Activated CD4-positive, alpha-beta T cell treated with anti-CD3 and anti-CD28 coated beads for 36 hours (primary cell): ENCODE measurements at regions of chr5 and their contacts with region 1.

Region 1: GRCh38 chr5:179668391-179668790 is 12.4 kb downstream of the CBY3 start:
- DNase-seq: peak; percentile 69
- ATAC-seq: peak; percentile 81
- H3K4me3 Mint-ChIP-seq: no peak overlapping the region
- H3K27ac Mint-ChIP-seq: no peak overlapping the region
- H3K4me1 Mint-ChIP-seq: no peaks in the 10 kb centered on the region
- H3K27me3 Mint-ChIP-seq: no peaks in the 10 kb centered on the region

Region 2: GRCh38 chr5:179568721-179569120 is 99.7 kb before region 1 on chr5:
- CTCF ChIA-PET with region 1: no interaction called
- POLR2A ChIA-PET with region 1: interaction called, 11 read pairs
- intact Hi-C with region 1: no loop called
- DNase-seq: no peak
- ATAC-seq: no peak
- H3K4me3 Mint-ChIP-seq: no peak overlapping the region
- H3K27ac Mint-ChIP-seq: no peak overlapping the region
- H3K4me1 Mint-ChIP-seq: no peaks in the 10 kb centered on the region
- H3K27me3 Mint-ChIP-seq: no peaks in the 10 kb centered on the region